Tibial artery (tissue), 4 donors: ENCODE measurements at regions of chr1 and their contacts with region 1.

Region 1: GRCh38 chr1:176897350-176898236 is 266.9 kb downstream of the ASTN1 start:
- DNase-seq: peak in 1 of 2 donors; percentile 47
- H3K4me3 ChIP-seq: peak overlapping the region in 1 of 2 donors; percentile 19
- H3K27ac ChIP-seq: no peak overlapping the region
- H3K4me1 ChIP-seq: peaks cover 0 to 9% (median 1%) of the 10 kb centered on the region in 4 donors
- H3K27me3 ChIP-seq: peaks cover 0 to 26% of the 10 kb centered on the region in 2 donors
- CTCF ChIP-seq: peak; percentile 51 to 59

Region 2: GRCh38 chr1:176843352-176844297 is 54.0 kb before region 1 on chr1:
- intact Hi-C with region 1: no loop called
- DNase-seq: peak in 1 of 2 donors; percentile 38
- H3K4me3 ChIP-seq: no peak overlapping the region
- H3K27ac ChIP-seq: peak overlapping the region in 1 of 2 donors; percentile 12
- H3K4me1 ChIP-seq: peaks cover 0 to 12% (median 7%) of the 10 kb centered on the region in 4 donors
- H3K27me3 ChIP-seq: no peaks in the 10 kb centered on the region
- CTCF ChIP-seq: peak; percentile 80 to 81

Region 3: GRCh38 chr1:177181631-177182291 is 284.2 kb after region 1 on chr1:
- intact Hi-C with region 1: loop called (anchors 2 kb)
- DNase-seq: peak; percentile 30 to 66
- H3K4me3 ChIP-seq: peak overlapping the region in 1 of 2 donors; percentile 26
- H3K27ac ChIP-seq: no peak overlapping the region
- H3K4me1 ChIP-seq: peaks cover 0 to 8% (median 4%) of the 10 kb centered on the region in 4 donors
- H3K27me3 ChIP-seq: peaks cover 0 to 20% of the 10 kb centered on the region in 2 donors
- CTCF ChIP-seq: peak; percentile 68 to 77

Region 4: DNA sequence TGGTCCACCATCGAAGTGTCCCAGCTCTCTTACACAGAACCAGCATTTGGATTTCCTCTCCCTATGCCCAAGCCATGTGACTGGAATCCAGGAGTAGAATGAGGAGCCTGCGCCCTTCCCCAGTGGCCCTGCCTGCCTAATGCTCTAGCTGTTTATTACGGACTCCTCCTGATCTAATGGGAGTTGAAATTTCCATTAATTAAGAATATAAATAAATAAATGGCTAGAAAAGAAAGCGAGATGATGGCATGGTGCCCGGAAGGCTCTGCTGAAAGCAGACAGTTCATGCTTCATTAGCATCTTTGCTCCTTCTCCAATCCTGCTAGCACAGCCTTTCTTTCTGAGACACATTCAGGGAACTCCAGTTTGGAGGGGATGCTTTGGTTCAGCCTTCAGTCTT is 856.1 kb after region 1 on chr1:
- intact Hi-C with region 1: no loop called
- DNase-seq: no peak
- H3K4me3 ChIP-seq: no peak overlapping the region
- H3K27ac ChIP-seq: no peak overlapping the region
- H3K4me1 ChIP-seq: no peaks in the 10 kb centered on the region
- H3K27me3 ChIP-seq: no peaks in the 10 kb centered on the region
- CTCF ChIP-seq: no peak

Region 5: GRCh38 chr1:177780096-177780700 is 882.6 kb after region 1 on chr1:
- intact Hi-C with region 1: loop called (anchors 5 kb)
- DNase-seq: no peak
- H3K4me3 ChIP-seq: no peak overlapping the region
- H3K27ac ChIP-seq: no peak overlapping the region
- H3K4me1 ChIP-seq: peaks cover 0 to 3% (median 0%) of the 10 kb centered on the region in 4 donors
- H3K27me3 ChIP-seq: peaks cover 0 to 11% of the 10 kb centered on the region in 2 donors
- CTCF ChIP-seq: peak; percentile 33 to 46